Kidney (tissue), 22 donors: ENCODE measurements at regions of chr10 and their contacts with region 1.

Region 1: GRCh38 chr10:22997102-22997501 is 69.2 kb downstream of the ARMC3 start:
- DNase-seq: no peak
- H3K4me3 ChIP-seq: no peak overlapping the region
- H3K27ac ChIP-seq: no peak overlapping the region
- H3K4me1 ChIP-seq: no peaks in the 10 kb centered on the region
- H3K27me3 ChIP-seq: no peaks in the 10 kb centered on the region
- CTCF ChIP-seq: no peak

Region 2: GRCh38 chr10:22003079-22003913 is 993.8 kb before region 1 on chr10 and contains the start of gene DNAJC1:
- intact Hi-C with region 1: loop called (anchors 10 kb)
- DNase-seq: peak; percentile 99
- H3K4me3 ChIP-seq: peak within 1 kb of the TSS; percentile 76 to 90 (median 83)
- H3K27ac ChIP-seq: peak within 1 kb of the TSS; percentile 91 to 97
- H3K4me1 ChIP-seq: peaks cover 3 to 7% (median 5%) of the 10 kb centered on the region in 3 donors
- H3K27me3 ChIP-seq: no peaks in the 10 kb centered on the region
- CTCF ChIP-seq: peak; percentile 1
- total RNA-seq, gene DNAJC1: 33.4 TPM